ENCODE measurements at regions of chr3 and their contacts with region 1.

Region 1: DNA sequence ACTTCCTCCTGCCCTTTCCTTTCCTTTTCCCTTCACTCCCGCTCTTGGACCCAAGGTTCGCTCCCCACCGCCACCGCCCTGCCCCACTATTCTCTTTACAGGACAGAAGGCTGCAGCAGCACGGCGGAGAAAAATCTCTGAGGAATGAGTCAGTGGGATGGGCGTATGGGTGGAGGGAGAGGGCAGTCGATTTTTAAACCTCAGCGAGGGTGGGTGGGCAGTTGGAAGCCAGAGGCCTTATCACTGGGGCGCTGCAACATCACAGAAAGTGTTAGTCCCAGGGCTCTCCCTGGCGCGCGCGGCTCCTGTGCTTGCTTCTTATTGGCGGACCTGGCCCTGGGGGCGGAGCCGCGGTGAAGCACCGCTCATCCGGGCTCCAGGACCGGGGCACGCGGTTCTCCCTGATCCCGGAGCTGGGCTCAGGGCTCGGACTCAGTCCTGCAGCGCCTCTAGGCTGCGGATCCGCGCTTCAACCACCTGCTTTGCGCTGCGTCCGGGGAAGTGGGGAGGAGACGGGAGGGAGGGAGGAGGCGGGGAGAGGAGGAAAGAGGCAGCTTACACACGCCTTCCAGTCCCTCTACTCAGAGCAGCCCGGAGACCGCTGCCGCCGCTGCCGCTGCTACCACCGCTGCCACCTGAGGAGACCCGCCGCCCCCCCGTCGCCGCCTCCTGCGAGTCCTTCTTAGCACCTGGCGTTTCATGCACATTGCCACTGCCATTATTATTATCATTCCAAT is at the start of gene ALCAM:
- DNase-seq: peak; percentile 96
- ATAC-seq: peak; percentile 90
- H3K4me3 ChIP-seq: peak within 1 kb of the TSS; percentile 63 to 84
- H3K27ac ChIP-seq: peak within 1 kb of the TSS; percentile 86
- H3K4me1 ChIP-seq: peaks cover 9% of the 10 kb centered on the region
- H3K27me3 ChIP-seq: no peaks in the 10 kb centered on the region
- CTCF ChIP-seq: peak; percentile 69
- total RNA-seq, gene ALCAM: 32.3 TPM

Region 2: DNA sequence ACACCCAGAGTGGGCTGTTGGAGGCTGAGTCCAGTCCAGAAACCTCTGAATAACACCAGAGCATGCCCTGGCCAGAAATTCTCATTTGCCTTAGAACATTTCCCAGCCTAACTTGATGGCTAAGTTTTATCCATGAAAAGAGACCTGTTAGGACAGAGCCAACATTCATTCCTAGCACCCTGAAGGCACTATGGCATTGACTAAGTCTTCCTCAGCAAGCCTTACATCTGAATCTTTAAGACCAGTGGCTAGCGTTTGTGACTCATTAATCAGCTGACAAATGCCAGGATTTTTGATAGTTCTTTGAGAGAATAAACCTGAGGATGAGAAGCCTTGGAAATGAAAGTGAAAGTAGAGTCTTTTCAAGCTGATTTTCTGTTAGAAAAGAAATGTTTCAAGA is 1086.9 kb before region 1 on chr3:
- CTCF ChIA-PET with region 1: no interaction called
- POLR2A ChIA-PET with region 1: no interaction called
- in situ Hi-C with region 1: no loop called
- intact Hi-C with region 1: loop called (anchors 5 kb)
- DNase-seq: no peak
- ATAC-seq: no peak
- H3K4me3 ChIP-seq: no peak overlapping the region
- H3K27ac ChIP-seq: no peak overlapping the region
- H3K4me1 ChIP-seq: no peaks in the 10 kb centered on the region
- H3K27me3 ChIP-seq: no peaks in the 10 kb centered on the region
- CTCF ChIP-seq: no peak

Region 3: DNA sequence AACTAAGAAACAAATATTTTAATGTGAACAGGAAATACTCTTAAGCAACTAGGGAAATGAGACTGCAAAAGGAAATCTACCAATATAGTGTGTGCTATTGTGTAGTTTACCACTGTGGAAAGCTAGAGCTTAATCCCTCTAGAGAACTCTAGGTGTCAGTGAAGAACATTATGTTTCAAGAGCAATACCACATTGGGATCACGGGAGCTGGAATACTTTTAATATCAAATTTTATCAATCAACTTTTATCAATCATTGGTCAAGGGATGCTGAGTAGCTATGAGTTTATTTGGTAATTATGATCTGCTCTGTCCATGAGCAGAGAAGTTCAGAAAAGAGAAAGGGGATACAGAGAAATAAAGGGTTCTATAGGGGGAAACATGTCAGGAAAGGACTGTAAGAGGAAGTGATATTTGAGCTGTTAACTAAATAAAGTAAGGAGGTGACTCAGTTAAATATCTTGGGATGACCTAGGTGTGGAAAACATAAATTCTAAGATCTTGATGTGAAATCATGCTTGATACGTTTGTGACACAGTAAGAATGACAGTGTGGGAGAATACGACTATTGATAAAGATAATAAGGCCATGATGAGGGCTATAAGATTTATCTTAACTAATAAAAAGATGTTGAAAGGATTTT is 762.0 kb before region 1 on chr3:
- CTCF ChIA-PET with region 1: no interaction called
- POLR2A ChIA-PET with region 1: no interaction called
- in situ Hi-C with region 1: no loop called
- intact Hi-C with region 1: loop called (anchors 5 kb)
- DNase-seq: no peak
- ATAC-seq: no peak
- H3K4me3 ChIP-seq: no peak overlapping the region
- H3K27ac ChIP-seq: no peak overlapping the region
- H3K4me1 ChIP-seq: no peaks in the 10 kb centered on the region
- H3K27me3 ChIP-seq: no peaks in the 10 kb centered on the region
- CTCF ChIP-seq: peak; percentile 14; the same call in 1 of the 2 replicates

Region 4: GRCh38 chr3:104886220-104886995 is 480.1 kb before region 1 on chr3:
- CTCF ChIA-PET with region 1: no interaction called
- POLR2A ChIA-PET with region 1: interaction called, 11 read pairs
- in situ Hi-C with region 1: no loop called
- intact Hi-C with region 1: no loop called
- DNase-seq: no peak
- ATAC-seq: no peak
- H3K4me3 ChIP-seq: no peak overlapping the region
- H3K27ac ChIP-seq: no peak overlapping the region
- H3K4me1 ChIP-seq: no peaks in the 10 kb centered on the region
- H3K27me3 ChIP-seq: no peaks in the 10 kb centered on the region
- CTCF ChIP-seq: no peak

Region 5: DNA sequence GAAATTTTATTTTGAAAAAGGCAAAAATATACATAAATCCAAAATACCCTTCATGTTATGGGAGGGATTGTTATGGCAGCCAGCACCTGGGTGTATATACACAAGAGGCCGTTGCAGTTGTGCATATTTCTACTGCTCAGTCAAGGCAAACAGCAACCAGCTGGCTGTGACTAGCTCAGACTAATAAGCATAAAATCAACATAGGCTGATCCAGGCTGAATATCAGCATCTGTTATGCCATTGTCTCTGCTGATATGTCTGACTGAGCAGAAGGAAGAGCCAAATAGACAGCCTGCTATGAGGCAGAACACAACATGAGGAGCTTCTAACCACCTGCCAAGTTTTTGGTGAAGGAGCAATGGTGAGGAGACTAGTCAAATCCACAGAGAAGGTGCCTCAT is 457.3 kb before region 1 on chr3:
- CTCF ChIA-PET with region 1: no interaction called
- POLR2A ChIA-PET with region 1: no interaction called
- in situ Hi-C with region 1: no loop called
- intact Hi-C with region 1: no loop called
- DNase-seq: no peak
- ATAC-seq: no peak
- H3K4me3 ChIP-seq: no peak overlapping the region
- H3K27ac ChIP-seq: no peak overlapping the region
- H3K4me1 ChIP-seq: no peaks in the 10 kb centered on the region
- H3K27me3 ChIP-seq: no peaks in the 10 kb centered on the region
- CTCF ChIP-seq: no peak

Region 6: GRCh38 chr3:105518806-105519418 is 152.4 kb after region 1 on chr3:
- CTCF ChIA-PET with region 1: no interaction called
- POLR2A ChIA-PET with region 1: no interaction called
- in situ Hi-C with region 1: no loop called
- intact Hi-C with region 1: loop called (anchors 5 kb)
- DNase-seq: peak; percentile 62
- ATAC-seq: peak; percentile 80
- H3K4me3 ChIP-seq: no peak overlapping the region
- H3K27ac ChIP-seq: no peak overlapping the region
- H3K4me1 ChIP-seq: no peaks in the 10 kb centered on the region
- H3K27me3 ChIP-seq: no peaks in the 10 kb centered on the region
- CTCF ChIP-seq: peak; percentile 68; the same call in 1 of the 2 replicates